ENCODE measurements at regions of chrX and their contacts with region 1.

Region 1: DNA sequence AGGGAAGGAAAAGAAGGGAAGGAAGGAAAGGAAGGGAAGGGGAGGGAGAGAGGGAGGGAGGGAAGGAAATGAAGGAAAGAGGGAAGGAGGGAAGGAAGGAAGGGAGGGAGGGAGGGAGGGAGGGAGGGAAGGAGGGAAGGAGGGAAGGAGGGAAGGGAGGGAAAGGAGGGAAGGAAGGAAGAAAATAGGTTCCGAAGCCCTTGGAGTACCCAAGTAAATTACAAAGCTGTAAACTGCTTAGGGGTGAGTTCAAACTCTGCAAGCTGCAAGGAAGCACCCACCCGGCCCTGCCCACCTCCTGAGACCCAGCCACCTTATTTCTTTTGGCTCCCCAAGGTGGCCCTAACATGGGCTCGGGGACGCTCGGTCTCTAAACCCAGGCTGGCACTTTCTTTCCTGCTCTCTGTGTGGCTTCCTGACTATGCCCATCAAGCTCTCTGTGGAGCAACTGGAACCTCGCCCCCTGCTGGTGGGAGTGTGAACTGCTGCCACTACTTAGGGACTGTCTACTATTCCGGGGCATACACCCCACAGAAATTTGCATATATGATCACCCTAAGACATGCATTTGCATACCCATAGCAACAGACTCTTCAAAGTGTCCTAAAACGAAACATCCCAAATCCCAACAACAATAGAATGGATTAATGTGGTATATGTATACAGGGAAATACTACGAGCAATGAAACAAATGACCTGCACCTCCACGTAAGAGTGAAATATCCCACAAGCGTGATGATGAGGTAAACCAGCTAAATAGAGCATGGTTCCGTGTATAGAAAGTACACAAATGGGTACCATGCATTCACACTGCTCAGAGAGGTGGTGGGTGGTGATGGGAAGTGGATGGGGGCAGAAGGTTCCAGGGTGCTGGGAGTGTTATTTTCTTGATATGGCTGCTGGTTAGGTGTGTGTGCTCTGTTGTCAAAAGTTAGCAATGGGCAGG is 151.7 kb upstream of the TBL1X start:
- DNase-seq: peak; percentile 46
- H3K4me3 ChIP-seq: no peak overlapping the region
- H3K27ac ChIP-seq: no peak overlapping the region
- H3K4me1 ChIP-seq: no peaks in the 10 kb centered on the region
- CTCF ChIP-seq: peak; percentile 80

Region 2: DNA sequence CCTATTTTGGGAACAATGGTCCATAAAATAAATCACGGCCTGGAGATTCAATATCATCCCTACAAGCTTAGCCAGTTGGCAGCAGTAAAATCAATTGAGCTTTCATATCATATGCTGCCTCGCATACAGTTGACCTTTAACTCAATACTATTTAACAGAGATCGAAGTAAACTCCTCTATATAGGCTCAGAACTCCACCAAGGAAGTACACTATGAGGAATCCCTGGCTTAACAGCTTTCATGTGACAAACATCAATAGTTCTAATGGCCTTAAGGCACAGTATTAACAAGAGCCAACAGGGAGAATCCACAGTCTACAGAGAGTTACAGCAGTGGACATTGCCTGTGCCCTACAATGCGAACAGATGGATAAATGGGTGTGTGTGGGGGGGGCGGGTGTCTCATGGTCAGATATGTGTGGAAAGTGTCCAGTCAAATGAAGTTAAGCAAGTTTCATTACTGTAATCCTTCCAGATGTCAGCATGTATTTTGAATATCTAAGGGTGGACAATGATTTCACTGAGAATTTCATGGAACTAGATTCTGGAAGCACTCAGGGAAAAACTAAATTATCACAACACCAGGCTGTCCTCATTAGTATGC is 181.1 kb before region 1 on chrX:
- CTCF ChIA-PET with region 1: interaction called, 15 read pairs
- POLR2A ChIA-PET with region 1: no interaction called
- intact Hi-C with region 1: no loop called
- DNase-seq: no peak
- H3K4me3 ChIP-seq: no peak overlapping the region
- H3K27ac ChIP-seq: no peak overlapping the region
- H3K4me1 ChIP-seq: no peaks in the 10 kb centered on the region
- CTCF ChIP-seq: no peak